Mammary epithelial cell (primary cell): ENCODE measurements at regions of chr6 and their contacts with region 1.

Region 1: GRCh38 chr6:12605888-12606345 is 110.7 kb upstream of the PHACTR1 start:
- DNase-seq: peak; percentile 61
- H3K4me3 ChIP-seq: no peak overlapping the region
- H3K27ac ChIP-seq: no peak overlapping the region
- H3K4me1 ChIP-seq: peaks cover 5% of the 10 kb centered on the region
- H3K27me3 ChIP-seq: no peaks in the 10 kb centered on the region
- CTCF ChIP-seq: peak; percentile 74 to 77

Region 2: GRCh38 chr6:11632795-11633511 is 973.0 kb before region 1 on chr6:
- CTCF ChIA-PET with region 1: no interaction called
- dilution Hi-C with region 1: no loop called
- in situ Hi-C with region 1: loop called in 1 of 2 experiments (anchors 25 kb)
- intact Hi-C with region 1: no loop called
- DNase-seq: peak; percentile 34
- H3K4me3 ChIP-seq: no peak overlapping the region
- H3K27ac ChIP-seq: no peak overlapping the region
- H3K4me1 ChIP-seq: peaks cover 4% of the 10 kb centered on the region
- H3K27me3 ChIP-seq: no peaks in the 10 kb centered on the region
- CTCF ChIP-seq: no peak

Region 3: GRCh38 chr6:12174878-12175277 is 431.0 kb before region 1 on chr6:
- CTCF ChIA-PET with region 1: no interaction called
- dilution Hi-C with region 1: no loop called
- in situ Hi-C with region 1: no loop called
- intact Hi-C with region 1: loop called (anchors 10 kb)
- DNase-seq: peak; percentile 60
- H3K4me3 ChIP-seq: no peak overlapping the region
- H3K27ac ChIP-seq: no peak overlapping the region
- H3K4me1 ChIP-seq: no peaks in the 10 kb centered on the region
- H3K27me3 ChIP-seq: no peaks in the 10 kb centered on the region
- CTCF ChIP-seq: no peak

Region 4: DNA sequence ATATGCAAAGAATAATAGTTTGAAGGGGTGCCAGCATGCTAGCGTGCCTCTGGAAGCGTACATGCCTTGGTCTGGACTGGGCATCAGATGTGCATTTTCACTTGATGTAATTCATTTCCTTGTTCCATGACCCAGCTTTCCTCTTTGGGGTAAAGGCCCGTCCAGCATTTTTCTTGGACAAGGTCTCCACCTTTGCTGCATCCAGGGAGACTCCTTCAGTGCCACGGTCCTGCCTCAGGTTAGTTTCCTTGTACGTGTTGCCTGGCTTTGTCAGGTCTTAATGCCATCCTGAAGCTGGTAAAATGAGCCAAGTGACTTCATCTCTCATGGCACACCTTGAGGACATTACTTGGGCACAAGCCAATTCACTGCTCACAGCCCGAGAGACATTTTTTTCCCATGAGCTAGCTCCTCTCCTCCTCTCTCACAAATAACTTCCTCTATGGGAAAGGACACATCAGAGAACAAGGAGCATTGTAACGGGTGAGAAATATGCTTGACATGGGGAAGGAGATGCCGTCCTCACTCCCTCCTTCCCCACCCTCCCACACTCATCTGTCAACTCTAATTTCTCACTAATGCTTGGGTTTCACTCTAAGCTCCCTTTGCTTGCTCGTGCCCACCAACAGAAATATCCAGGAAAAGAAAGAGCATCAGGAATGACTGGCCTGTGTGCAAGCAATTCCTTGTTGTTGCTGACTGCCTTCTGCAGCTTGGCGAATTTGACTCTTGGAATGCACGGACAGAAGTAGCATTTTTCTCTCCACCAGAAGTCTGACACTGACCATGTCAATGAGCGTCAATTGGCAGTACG is 291.7 kb before region 1 on chr6:
- CTCF ChIA-PET with region 1: interaction called, 7 read pairs
- dilution Hi-C with region 1: no loop called
- in situ Hi-C with region 1: no loop called
- intact Hi-C with region 1: loop called (anchors 1 kb)
- DNase-seq: peak; percentile 90
- H3K4me3 ChIP-seq: no peak overlapping the region
- H3K27ac ChIP-seq: peak overlapping the region; percentile 83
- H3K4me1 ChIP-seq: peaks cover 23% of the 10 kb centered on the region
- H3K27me3 ChIP-seq: no peaks in the 10 kb centered on the region
- CTCF ChIP-seq: no peak

Region 5: DNA sequence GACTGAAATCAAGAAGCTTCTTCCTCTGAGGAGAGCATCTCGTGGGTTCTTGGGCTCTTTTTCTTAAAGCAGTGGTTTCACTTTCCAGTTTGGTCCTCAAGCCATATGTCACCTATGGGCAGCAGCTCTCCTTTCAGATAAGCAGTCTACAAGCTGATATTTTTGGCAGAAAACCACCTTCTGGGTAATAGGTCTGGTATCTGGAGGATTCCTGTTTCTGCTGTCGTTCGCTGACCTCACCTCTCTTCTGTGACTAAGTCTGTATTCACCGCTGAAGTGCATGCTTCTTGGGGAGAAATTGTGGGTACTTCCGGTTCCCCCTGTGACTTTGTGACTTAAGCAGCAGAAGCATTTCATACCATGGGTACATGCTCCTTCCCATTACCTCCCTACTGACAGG is 122.2 kb before region 1 on chr6:
- CTCF ChIA-PET with region 1: no interaction called
- dilution Hi-C with region 1: no loop called
- in situ Hi-C with region 1: no loop called
- intact Hi-C with region 1: loop called (anchors 5 kb)
- DNase-seq: peak; percentile 91
- H3K4me3 ChIP-seq: no peak overlapping the region
- H3K27ac ChIP-seq: peak overlapping the region; percentile 74
- H3K4me1 ChIP-seq: peaks cover 30% of the 10 kb centered on the region
- H3K27me3 ChIP-seq: no peaks in the 10 kb centered on the region
- CTCF ChIP-seq: no peak

Region 6: GRCh38 chr6:12557765-12558164 is 48.2 kb before region 1 on chr6:
- CTCF ChIA-PET with region 1: no interaction called
- dilution Hi-C with region 1: no loop called
- in situ Hi-C with region 1: no loop called
- intact Hi-C with region 1: no loop called
- DNase-seq: no peak
- H3K4me3 ChIP-seq: no peak overlapping the region
- H3K27ac ChIP-seq: no peak overlapping the region
- H3K4me1 ChIP-seq: no peaks in the 10 kb centered on the region
- H3K27me3 ChIP-seq: no peaks in the 10 kb centered on the region
- CTCF ChIP-seq: no peak

Region 7: DNA sequence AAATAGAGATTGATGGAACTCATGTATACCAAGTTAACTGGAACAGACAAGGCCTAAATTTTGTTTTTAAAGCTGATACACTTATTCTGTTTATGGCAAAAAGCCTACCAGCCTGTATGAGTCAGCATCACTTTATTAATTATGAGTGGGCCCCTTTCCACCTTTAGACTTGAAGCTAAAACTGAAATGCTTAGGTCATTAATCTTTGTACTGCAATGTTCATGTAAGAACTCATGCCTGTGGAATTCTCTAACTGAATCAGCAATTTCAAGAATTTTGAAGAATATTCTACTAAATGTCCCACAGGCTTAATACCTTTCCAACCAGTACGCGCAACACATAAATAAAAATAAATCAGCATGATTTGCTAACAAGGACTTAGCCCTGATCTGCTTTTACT is 29.5 kb before region 1 on chr6:
- CTCF ChIA-PET with region 1: interaction called, 5 read pairs
- dilution Hi-C with region 1: no loop called
- in situ Hi-C with region 1: no loop called
- intact Hi-C with region 1: loop called (anchors 2 kb)
- DNase-seq: peak; percentile 66
- H3K4me3 ChIP-seq: no peak overlapping the region
- H3K27ac ChIP-seq: peak overlapping the region; percentile 83
- H3K4me1 ChIP-seq: peaks cover 48% of the 10 kb centered on the region
- H3K27me3 ChIP-seq: no peaks in the 10 kb centered on the region
- CTCF ChIP-seq: no peak

Region 8: GRCh38 chr6:12804952-12805645 is 199.2 kb after region 1 on chr6:
- CTCF ChIA-PET with region 1: no interaction called
- dilution Hi-C with region 1: no loop called
- in situ Hi-C with region 1: no loop called
- intact Hi-C with region 1: no loop called
- DNase-seq: no peak
- H3K4me3 ChIP-seq: no peak overlapping the region
- H3K27ac ChIP-seq: no peak overlapping the region
- H3K4me1 ChIP-seq: no peaks in the 10 kb centered on the region
- H3K27me3 ChIP-seq: no peaks in the 10 kb centered on the region
- CTCF ChIP-seq: no peak